Transverse colon (tissue), 4 donors: ENCODE measurements at regions of chr17 and their contacts with region 1.

Region 1: GRCh38 chr17:65055348-65056261 is 935 bp downstream of the GNA13 start:
- DNase-seq: peak; percentile 69
- H3K4me3 ChIP-seq: peak overlapping the region; percentile 66 to 97 (median 80)
- H3K27ac ChIP-seq: peak overlapping the region; percentile 98 to 99 (median 98)
- H3K4me1 ChIP-seq: peaks cover 14 to 55% (median 22%) of the 10 kb centered on the region in 4 donors
- H3K27me3 ChIP-seq: no peaks in the 10 kb centered on the region
- CTCF ChIP-seq: no peak
- EP300 ChIP-seq: no peak
- POLR2A ChIP-seq: no peak

Region 2: DNA sequence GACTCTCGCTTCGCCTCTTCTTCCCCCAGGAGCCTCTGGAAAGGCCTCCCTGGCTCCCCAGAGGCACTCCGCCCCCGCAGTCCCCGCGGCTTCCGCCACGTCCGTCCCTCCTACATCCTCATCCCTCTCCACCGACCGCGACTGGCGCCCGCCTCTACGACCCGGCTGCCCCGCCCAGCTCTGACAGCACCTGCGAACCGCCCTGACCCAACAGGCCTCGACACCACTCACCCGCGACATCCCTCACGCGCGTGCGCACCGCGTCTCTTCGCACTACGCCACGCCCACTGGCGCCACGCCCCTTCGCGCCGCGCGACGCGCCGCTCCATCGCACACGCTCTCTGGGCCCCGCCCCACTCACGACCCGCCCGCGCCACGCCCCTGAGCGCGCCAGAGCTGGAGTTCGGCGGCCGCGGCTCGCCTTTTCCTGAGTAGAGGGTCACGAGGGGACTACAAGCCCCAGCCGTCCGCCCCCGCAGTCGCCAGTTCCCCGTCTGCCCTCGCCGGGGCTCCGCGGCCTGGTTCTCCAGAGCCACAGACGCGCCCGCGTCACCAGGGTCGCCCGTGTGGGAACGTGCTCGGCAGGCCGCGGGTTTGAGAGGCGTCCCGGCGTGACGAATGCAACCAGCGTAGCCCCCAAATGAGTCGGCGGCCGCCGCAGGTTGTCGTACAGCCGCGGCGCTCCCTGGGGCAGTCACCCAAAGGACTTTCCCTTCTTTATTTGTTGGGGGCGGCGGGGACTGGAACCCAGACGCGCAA is 80.1 kb before region 1 on chr17:
- in situ Hi-C with region 1: no loop called
- intact Hi-C with region 1: loop called (anchors 1 kb)
- DNase-seq: peak; percentile 97
- H3K4me3 ChIP-seq: peak overlapping the region; percentile 54 to 87 (median 85)
- H3K27ac ChIP-seq: peak overlapping the region; percentile 96 to 99 (median 99)
- H3K4me1 ChIP-seq: peaks cover 5 to 21% (median 13%) of the 10 kb centered on the region in 4 donors
- H3K27me3 ChIP-seq: no peaks in the 10 kb centered on the region
- CTCF ChIP-seq: no peak
- EP300 ChIP-seq: no peak
- POLR2A ChIP-seq: peak; percentile 93

Region 3: GRCh38 chr17:65017207-65017774 is 38.3 kb before region 1 on chr17:
- in situ Hi-C with region 1: no loop called
- intact Hi-C with region 1: loop called (anchors 5 kb)
- DNase-seq: no peak
- H3K4me3 ChIP-seq: no peak overlapping the region
- H3K27ac ChIP-seq: peak overlapping the region; percentile 51 to 73 (median 62)
- H3K4me1 ChIP-seq: peaks cover 21 to 69% (median 37%) of the 10 kb centered on the region in 4 donors
- H3K27me3 ChIP-seq: no peaks in the 10 kb centered on the region
- CTCF ChIP-seq: no peak
- EP300 ChIP-seq: no peak
- POLR2A ChIP-seq: no peak

Region 4: GRCh38 chr17:65093930-65094329 is 38.3 kb after region 1 on chr17:
- in situ Hi-C with region 1: no loop called
- intact Hi-C with region 1: no loop called
- DNase-seq: no peak
- H3K4me3 ChIP-seq: no peak overlapping the region
- H3K27ac ChIP-seq: peak overlapping the region in 1 of 4 donors; percentile 70
- H3K4me1 ChIP-seq: peaks cover 0 to 16% (median 6%) of the 10 kb centered on the region in 4 donors
- H3K27me3 ChIP-seq: no peaks in the 10 kb centered on the region
- CTCF ChIP-seq: peak in 3 of 5 experiments; percentile 6 to 14 (median 10)
- EP300 ChIP-seq: no peak
- POLR2A ChIP-seq: no peak